BJ (cell line): ENCODE measurements at regions of chr20 and their contacts with region 1.

Region 1: GRCh38 chr20:21323640-21324039 is 20.5 kb downstream of the XRN2 start:
- DNase-seq: peak; percentile 19
- H3K4me3 ChIP-seq: no peak overlapping the region
- H3K27me3 ChIP-seq: no peaks in the 10 kb centered on the region
- CTCF ChIP-seq: no peak

Region 2: DNA sequence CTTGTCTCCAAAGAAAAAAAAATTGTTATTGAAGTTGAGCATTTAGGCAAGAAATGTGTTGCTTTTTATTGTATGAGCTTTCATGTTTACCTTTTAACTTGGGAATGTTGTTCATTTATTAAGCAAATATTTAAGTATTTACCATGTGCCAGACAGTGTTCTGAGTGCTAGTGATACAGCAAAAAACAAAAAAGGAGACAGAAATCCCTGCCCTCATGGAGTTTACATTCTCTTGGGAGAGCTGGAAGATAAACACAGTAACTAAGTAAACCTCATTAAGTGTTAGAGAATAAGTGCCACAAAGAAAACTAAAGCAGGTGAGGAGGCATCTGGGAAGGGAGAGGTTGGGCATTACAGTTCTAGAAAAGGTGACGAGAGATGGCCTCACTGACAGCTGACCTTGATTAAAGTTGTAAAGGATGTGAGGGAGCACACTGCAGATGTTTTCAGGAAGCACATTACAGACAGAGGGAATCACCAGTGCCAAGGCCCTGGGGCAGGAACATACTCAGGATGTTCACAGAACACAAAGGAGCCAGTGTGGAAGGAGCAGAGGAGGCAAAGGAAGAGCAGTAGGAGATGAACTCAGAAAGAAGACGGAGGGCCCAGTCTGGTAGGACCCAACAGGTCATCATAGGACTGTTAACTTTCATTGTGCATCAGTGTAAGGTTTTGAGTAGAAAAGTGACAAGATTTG is 13.0 kb after region 1 on chr20:
- CTCF ChIA-PET with region 1: interaction called, 14 read pairs
- POLR2A ChIA-PET with region 1: no interaction called
- DNase-seq: no peak
- H3K4me3 ChIP-seq: no peak overlapping the region
- H3K27me3 ChIP-seq: no peaks in the 10 kb centered on the region
- CTCF ChIP-seq: no peak

Region 3: DNA sequence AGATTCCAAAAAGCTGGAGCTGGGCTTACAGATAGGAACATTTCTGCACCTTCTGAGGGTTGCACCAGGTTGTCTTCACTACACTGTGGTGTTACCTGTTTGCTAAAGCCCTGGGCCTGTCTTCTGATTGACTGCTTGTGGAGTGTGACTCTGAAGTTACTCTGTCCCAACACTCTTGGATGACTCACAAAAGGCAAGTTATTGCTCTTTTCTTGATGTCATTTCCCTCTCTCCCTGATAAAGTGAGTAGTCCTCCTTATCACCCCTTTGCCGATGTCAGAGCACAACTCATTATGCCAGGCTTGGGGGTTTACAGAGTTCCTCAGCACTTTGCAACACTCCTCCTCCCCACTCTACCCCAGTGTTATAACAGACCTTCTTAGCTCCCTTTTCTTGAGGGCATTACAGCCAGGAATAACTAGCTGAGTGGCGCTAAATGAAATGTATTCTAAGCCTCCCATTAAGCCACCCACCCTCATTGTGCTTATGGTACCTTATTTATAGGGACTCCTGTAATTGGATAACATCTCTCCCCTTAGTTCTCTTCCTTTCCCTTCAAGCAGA is 109.8 kb after region 1 on chr20:
- CTCF ChIA-PET with region 1: no interaction called
- POLR2A ChIA-PET with region 1: no interaction called
- DNase-seq: no peak
- H3K4me3 ChIP-seq: no peak overlapping the region
- H3K27me3 ChIP-seq: no peaks in the 10 kb centered on the region
- CTCF ChIP-seq: no peak